ENCODE measurements at regions of chr6 and their contacts with region 1.

Region 1: GRCh38 chr6:114304304-114304887 is 38.4 kb downstream of the HS3ST5 start:
- DNase-seq: no peak
- H3K4me3 Mint-ChIP-seq: no peak overlapping the region
- H3K27ac Mint-ChIP-seq: no peak overlapping the region
- H3K4me1 Mint-ChIP-seq: no peaks in the 10 kb centered on the region
- H3K27me3 Mint-ChIP-seq: peaks cover 1% of the 10 kb centered on the region

Region 2: GRCh38 chr6:114119056-114119455 is 185.3 kb before region 1 on chr6:
- CTCF ChIA-PET with region 1: no interaction called
- POLR2A ChIA-PET with region 1: no interaction called
- intact Hi-C with region 1: no loop called
- DNase-seq: no peak
- H3K4me3 Mint-ChIP-seq: no peak overlapping the region
- H3K27ac Mint-ChIP-seq: no peak overlapping the region
- H3K4me1 Mint-ChIP-seq: no peaks in the 10 kb centered on the region
- H3K27me3 Mint-ChIP-seq: peaks cover 5% of the 10 kb centered on the region

Region 3: DNA sequence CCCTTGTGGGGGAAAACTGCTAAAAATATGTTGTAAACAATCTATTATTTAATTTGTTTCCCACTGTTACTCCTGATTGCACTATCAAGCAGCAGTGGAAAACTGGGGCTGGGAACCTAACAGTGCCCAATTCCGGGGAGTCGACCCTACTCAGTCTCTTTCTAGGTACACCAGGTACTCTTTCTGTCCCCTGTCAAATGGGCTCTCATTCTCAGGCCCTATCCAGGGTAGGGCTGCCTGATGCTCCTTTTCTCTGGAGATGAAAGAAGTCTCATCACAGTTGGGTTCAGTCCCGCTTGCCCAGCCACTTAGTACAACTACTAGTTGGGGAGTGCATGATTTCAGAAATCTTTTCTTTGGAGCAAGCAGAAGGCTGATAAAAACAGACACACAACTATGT is 13.5 kb before region 1 on chr6:
- CTCF ChIA-PET with region 1: interaction called, 10 read pairs
- POLR2A ChIA-PET with region 1: no interaction called
- intact Hi-C with region 1: no loop called
- DNase-seq: no peak
- H3K4me3 Mint-ChIP-seq: no peak overlapping the region
- H3K27ac Mint-ChIP-seq: no peak overlapping the region
- H3K4me1 Mint-ChIP-seq: no peaks in the 10 kb centered on the region
- H3K27me3 Mint-ChIP-seq: no peaks in the 10 kb centered on the region

Region 4: GRCh38 chr6:114419175-114419574 is 114.8 kb after region 1 on chr6:
- CTCF ChIA-PET with region 1: no interaction called
- POLR2A ChIA-PET with region 1: no interaction called
- intact Hi-C with region 1: no loop called
- DNase-seq: no peak
- H3K4me3 Mint-ChIP-seq: no peak overlapping the region
- H3K27ac Mint-ChIP-seq: no peak overlapping the region
- H3K4me1 Mint-ChIP-seq: no peaks in the 10 kb centered on the region
- H3K27me3 Mint-ChIP-seq: no peaks in the 10 kb centered on the region

Measured in activated CD4-positive, alpha-beta memory T cell treated with anti-CD3 and anti-CD28 coated beads for 36 hours (primary cell).